ENCODE measurements at regions of chr17 and their contacts with region 1.

Region 1: DNA sequence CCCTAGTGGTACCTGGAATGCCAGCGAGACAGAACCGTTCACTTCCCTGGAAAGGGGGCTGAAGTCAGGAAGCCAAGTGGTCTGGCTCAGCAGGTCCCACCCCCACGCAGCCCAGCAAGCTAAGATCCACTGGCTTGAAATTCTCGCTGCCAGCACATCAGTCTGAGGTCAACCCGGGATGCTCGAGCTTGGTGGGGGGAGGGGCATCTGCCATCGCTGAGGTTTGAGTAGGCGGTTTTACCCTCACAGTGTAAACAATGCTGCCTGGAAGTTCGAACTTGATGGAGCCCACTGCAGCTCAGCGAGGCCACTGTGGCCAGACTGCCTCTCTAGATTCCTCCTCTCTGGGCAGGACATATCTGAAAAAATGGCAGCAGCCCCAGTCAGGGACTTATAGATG is 464.7 kb upstream of the TOM1L1 start:
- DNase-seq: no peak
- H3K4me3 ChIP-seq: no peak overlapping the region
- H3K27ac ChIP-seq: no peak overlapping the region
- H3K4me1 ChIP-seq: no peaks in the 10 kb centered on the region
- H3K27me3 ChIP-seq: no peaks in the 10 kb centered on the region
- CTCF ChIP-seq: no peak

Region 2: DNA sequence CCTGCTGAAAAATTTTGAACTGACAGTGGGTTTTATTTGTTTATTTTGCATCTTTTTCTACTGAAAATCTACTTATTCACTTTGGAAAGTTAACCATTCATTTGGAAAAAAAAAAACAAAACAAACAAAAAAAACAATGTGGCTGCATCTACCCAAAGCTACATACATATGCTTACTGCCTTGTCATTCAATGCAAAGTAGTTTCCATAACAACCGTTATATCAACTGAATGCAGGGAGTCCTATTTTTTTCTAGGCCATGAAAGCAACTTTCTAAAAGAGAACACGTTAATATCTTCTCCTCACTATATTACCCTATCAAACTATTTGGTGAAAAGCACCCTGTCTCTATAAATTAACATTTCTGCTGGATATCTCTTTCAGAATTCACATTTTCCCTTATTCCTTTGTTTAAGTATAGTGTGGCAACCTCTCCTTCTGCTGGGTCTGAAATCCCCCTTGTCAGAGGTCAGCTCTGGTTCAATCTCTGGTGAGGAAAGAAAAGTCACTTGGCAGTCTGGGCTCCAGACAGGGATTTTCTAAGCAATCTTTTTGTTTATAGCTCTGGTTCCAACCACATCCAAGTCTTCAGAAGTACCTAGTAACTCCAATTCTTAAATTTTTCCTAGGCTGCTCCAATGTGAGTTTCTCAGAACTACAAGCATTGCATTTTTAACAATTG is 63.8 kb before region 1 on chr17:
- intact Hi-C with region 1: loop called (anchors 10 kb)
- DNase-seq: no peak
- H3K4me3 ChIP-seq: no peak overlapping the region
- H3K27ac ChIP-seq: no peak overlapping the region
- H3K4me1 ChIP-seq: no peaks in the 10 kb centered on the region
- H3K27me3 ChIP-seq: no peaks in the 10 kb centered on the region
- CTCF ChIP-seq: no peak

Region 3: GRCh38 chr17:54455251-54455868 is 19.4 kb after region 1 on chr17:
- intact Hi-C with region 1: no loop called
- DNase-seq: no peak
- H3K4me3 ChIP-seq: no peak overlapping the region
- H3K27ac ChIP-seq: no peak overlapping the region
- H3K4me1 ChIP-seq: no peaks in the 10 kb centered on the region
- H3K27me3 ChIP-seq: no peaks in the 10 kb centered on the region
- CTCF ChIP-seq: no peak

Measured in ascending aorta (tissue), 2 donors.